CD8-positive, alpha-beta T cell (primary cell): ENCODE measurements at regions of chr9 and their contacts with region 1.

Region 1: DNA sequence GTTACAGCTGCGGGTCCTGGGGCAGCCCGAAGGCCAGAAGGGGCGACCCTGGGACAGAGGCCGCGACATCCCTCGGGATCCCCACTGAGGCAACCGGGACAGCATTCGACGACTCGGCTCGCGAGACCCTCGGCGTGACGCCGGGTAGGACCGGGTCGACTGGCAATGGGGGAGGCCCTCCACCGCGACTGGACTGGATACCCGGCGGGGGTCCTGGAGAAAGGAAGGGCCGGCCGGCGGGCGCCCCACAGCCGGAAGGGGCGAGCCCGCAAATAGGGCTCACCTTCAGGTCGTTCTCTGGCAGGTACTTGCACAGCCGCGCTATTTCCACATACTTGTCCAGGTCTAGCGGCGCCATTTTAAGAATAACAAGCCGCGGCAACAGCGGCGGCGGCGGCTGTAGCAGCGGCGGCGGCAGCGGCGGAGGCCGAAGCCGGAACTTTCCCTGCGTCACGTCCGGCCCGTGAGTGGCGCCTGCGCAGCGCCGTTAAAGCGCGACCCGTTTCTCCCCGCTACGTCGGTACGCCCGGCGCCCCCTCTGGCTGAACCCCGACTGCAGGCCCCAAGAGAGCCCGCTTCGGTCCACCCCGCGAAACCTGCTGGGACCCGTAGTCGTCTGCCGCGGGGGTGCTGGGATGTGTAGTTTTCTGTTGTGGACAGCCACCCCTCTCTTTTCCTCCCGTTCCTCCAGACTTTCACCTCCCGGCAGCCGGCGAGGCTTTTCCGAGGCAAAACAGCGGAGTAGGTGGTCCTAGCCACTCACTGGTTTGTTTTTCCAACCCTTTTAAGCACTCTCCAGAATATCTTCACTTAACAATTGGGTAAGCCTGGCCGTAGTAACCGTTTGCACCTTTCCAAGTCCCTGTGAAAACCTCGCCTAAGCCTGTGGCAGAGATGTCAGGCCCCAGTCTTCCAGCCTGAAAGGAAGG is at the start of gene PPP6C:
- DNase-seq: peak; percentile 94 to 99 (median 97)
- ATAC-seq: peak; percentile 95
- H3K4me3 ChIP-seq: peak within 1 kb of the TSS; percentile 98
- H3K4me3 Mint-ChIP-seq: peak within 1 kb of the TSS; percentile 97
- H3K27ac ChIP-seq: peak within 1 kb of the TSS; percentile 97 to 98
- H3K27ac Mint-ChIP-seq: peak within 1 kb of the TSS; percentile 93
- H3K4me1 ChIP-seq: peaks cover 56% of the 10 kb centered on the region
- H3K4me1 Mint-ChIP-seq: peaks cover 71% of the 10 kb centered on the region
- H3K27me3 ChIP-seq: no peaks in the 10 kb centered on the region
- H3K27me3 Mint-ChIP-seq: no peaks in the 10 kb centered on the region
- CTCF ChIP-seq: peak; percentile 63
- total RNA-seq, gene PPP6C: 37.8 to 38.3 TPM

Region 2: GRCh38 chr9:124861342-124862229 is 328.0 kb before region 1 on chr9 and contains the starts of genes ARPC5L and RPL35:
- CTCF ChIA-PET with region 1: no interaction called
- POLR2A ChIA-PET with region 1: no interaction called
- intact Hi-C with region 1: loop called in 1 of 2 experiments (anchors 5 kb)
- DNase-seq: peak; percentile 90 to 97 (median 95)
- ATAC-seq: peak; percentile 95
- H3K4me3 ChIP-seq: peak within 1 kb of the TSS; percentile 67 to 90
- H3K4me3 Mint-ChIP-seq: peak within 1 kb of the TSS; percentile 97
- H3K27ac ChIP-seq: peak within 1 kb of the TSS; percentile 88 to 93
- H3K27ac Mint-ChIP-seq: peak within 1 kb of the TSS; percentile 98
- H3K4me1 ChIP-seq: peaks cover 16% of the 10 kb centered on the region
- H3K4me1 Mint-ChIP-seq: peaks cover 31% of the 10 kb centered on the region
- H3K27me3 ChIP-seq: no peaks in the 10 kb centered on the region
- H3K27me3 Mint-ChIP-seq: no peaks in the 10 kb centered on the region
- CTCF ChIP-seq: no peak
- total RNA-seq, gene ARPC5L: 43.2 to 45.5 TPM
- total RNA-seq, gene RPL35: 1,798 to 1,805 TPM

Region 3: GRCh38 chr9:125172031-125172755 is 17.4 kb before region 1 on chr9:
- CTCF ChIA-PET with region 1: no interaction called
- POLR2A ChIA-PET with region 1: no interaction called
- intact Hi-C with region 1: no loop called
- DNase-seq: no peak
- ATAC-seq: no peak
- H3K4me3 ChIP-seq: no peak overlapping the region
- H3K4me3 Mint-ChIP-seq: peak overlapping the region; percentile 32
- H3K27ac ChIP-seq: no peak overlapping the region
- H3K27ac Mint-ChIP-seq: peak overlapping the region; percentile 86
- H3K4me1 ChIP-seq: peaks cover 10% of the 10 kb centered on the region
- H3K4me1 Mint-ChIP-seq: peaks cover 48% of the 10 kb centered on the region
- H3K27me3 ChIP-seq: no peaks in the 10 kb centered on the region
- H3K27me3 Mint-ChIP-seq: no peaks in the 10 kb centered on the region
- CTCF ChIP-seq: no peak

Region 4: GRCh38 chr9:125200210-125201047 is 10.8 kb after region 1 on chr9 and contains the start of gene RABEPK:
- CTCF ChIA-PET with region 1: interaction called, 4 read pairs
- POLR2A ChIA-PET with region 1: interaction called, 15 read pairs
- intact Hi-C with region 1: loop called (anchors 1 kb)
- DNase-seq: peak; percentile 74 to 94 (median 89)
- ATAC-seq: peak; percentile 97
- H3K4me3 ChIP-seq: peak within 1 kb of the TSS; percentile 77 to 100
- H3K4me3 Mint-ChIP-seq: peak within 1 kb of the TSS; percentile 91
- H3K27ac ChIP-seq: peak within 1 kb of the TSS; percentile 85 to 88
- H3K27ac Mint-ChIP-seq: peak within 1 kb of the TSS; percentile 90
- H3K4me1 ChIP-seq: peaks cover 41% of the 10 kb centered on the region
- H3K4me1 Mint-ChIP-seq: peaks cover 51% of the 10 kb centered on the region
- H3K27me3 ChIP-seq: no peaks in the 10 kb centered on the region
- H3K27me3 Mint-ChIP-seq: no peaks in the 10 kb centered on the region
- CTCF ChIP-seq: no peak
- total RNA-seq, gene RABEPK: 6.2 to 6.9 TPM

Region 5: DNA sequence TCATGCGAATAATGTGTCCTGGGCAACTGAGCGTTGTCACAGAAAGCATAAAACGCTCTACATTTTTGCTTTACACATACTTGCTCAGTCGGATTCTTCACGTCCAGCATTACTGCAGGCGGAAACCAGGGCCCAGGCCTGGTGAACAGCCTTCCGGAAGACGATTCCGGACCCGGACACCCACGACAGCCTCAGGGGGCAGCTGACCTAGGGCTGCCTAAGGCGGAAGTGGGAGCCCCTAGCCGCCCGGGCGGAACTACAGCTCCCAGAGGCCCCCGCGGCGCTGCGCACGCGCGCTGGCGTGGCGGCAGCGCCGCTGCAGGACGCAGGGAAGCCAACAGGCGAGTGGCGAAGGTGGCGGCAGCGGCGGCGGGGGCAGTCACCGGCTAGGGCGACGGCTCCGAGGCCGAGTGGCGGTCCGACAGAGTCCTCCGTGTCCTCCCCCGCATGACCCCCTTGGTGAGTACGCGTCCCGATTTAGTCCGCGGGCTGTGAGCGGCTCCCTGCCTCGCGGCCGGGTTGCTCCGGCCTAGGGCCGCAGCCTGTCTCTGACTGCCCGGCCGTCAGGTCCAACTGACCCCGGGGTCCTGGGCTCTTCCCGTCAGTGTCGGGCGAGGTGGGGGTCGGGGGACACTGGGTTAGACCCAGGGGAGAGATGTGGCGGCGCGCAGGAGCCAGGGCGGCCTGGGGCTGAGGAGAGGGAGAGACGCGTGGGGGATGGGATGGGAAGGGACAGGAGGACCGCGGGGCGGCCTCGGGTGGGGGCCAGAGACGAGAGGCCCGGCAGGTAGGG is 72.1 kb after region 1 on chr9 and contains the start of gene GAPVD1:
- CTCF ChIA-PET with region 1: no interaction called
- POLR2A ChIA-PET with region 1: no interaction called
- intact Hi-C with region 1: loop called (anchors 1 kb)
- DNase-seq: peak; percentile 72 to 94 (median 86)
- ATAC-seq: peak; percentile 92
- H3K4me3 ChIP-seq: peak within 1 kb of the TSS; percentile 90 to 99
- H3K4me3 Mint-ChIP-seq: peak within 1 kb of the TSS; percentile 98
- H3K27ac ChIP-seq: peak within 1 kb of the TSS; percentile 67 to 78
- H3K27ac Mint-ChIP-seq: peak within 1 kb of the TSS; percentile 94
- H3K4me1 ChIP-seq: peaks cover 29% of the 10 kb centered on the region
- H3K4me1 Mint-ChIP-seq: peaks cover 49% of the 10 kb centered on the region
- H3K27me3 ChIP-seq: no peaks in the 10 kb centered on the region
- H3K27me3 Mint-ChIP-seq: peaks cover 2% of the 10 kb centered on the region
- CTCF ChIP-seq: peak; percentile 54
- total RNA-seq, gene GAPVD1: 81.0 to 84.1 TPM

Region 6: DNA sequence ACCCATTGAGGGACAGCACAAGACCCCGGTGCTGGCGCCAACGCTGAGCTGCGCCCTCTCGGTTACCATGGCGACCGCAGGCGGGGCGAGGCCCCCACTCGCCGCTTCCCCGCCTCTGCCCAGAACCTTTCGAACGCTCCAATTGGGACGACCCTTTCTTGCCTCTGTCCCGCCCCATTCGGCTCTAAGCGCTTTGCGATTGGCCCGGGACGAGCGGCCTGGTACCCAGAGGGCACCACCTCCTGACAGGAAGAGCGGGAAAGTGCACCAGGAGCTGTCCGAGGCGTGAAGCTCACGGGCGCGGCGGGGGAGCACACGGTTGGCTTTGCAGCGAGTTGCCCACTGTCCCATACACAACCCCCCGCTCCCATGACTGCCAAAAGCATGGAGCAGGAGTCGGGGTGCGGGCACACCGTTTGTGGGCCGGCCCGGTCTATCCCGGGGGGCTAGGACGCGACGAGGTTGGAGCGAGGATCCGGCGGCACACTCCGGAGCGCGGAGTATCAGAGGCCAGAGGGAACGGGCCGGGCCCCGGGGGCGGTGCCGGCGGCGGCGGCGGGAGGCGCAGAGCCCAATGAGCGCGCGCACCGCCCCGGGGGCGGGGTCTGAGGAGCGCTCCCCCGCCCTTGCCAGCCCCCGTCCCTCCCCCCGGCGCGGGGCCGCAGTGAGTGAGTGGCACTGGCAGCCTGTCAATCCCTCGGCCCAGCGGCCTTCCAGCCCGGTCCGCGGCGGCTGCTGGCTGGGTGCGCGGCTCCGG is 556.6 kb after region 1 on chr9:
- CTCF ChIA-PET with region 1: no interaction called
- POLR2A ChIA-PET with region 1: no interaction called
- intact Hi-C with region 1: loop called in 1 of 2 experiments (anchors 5 kb)
- DNase-seq: peak; percentile 74 to 96 (median 92)
- ATAC-seq: peak; percentile 85
- H3K4me3 ChIP-seq: peak overlapping the region; percentile 74 to 91
- H3K4me3 Mint-ChIP-seq: peak overlapping the region; percentile 98
- H3K27ac ChIP-seq: peak overlapping the region; percentile 7 to 56
- H3K27ac Mint-ChIP-seq: peak overlapping the region; percentile 88
- H3K4me1 ChIP-seq: peaks cover 11% of the 10 kb centered on the region
- H3K4me1 Mint-ChIP-seq: peaks cover 29% of the 10 kb centered on the region
- H3K27me3 ChIP-seq: no peaks in the 10 kb centered on the region
- H3K27me3 Mint-ChIP-seq: no peaks in the 10 kb centered on the region
- CTCF ChIP-seq: no peak